PC-9 (cell line): ENCODE measurements at regions of chr13 and their contacts with region 1.

Region 1: DNA sequence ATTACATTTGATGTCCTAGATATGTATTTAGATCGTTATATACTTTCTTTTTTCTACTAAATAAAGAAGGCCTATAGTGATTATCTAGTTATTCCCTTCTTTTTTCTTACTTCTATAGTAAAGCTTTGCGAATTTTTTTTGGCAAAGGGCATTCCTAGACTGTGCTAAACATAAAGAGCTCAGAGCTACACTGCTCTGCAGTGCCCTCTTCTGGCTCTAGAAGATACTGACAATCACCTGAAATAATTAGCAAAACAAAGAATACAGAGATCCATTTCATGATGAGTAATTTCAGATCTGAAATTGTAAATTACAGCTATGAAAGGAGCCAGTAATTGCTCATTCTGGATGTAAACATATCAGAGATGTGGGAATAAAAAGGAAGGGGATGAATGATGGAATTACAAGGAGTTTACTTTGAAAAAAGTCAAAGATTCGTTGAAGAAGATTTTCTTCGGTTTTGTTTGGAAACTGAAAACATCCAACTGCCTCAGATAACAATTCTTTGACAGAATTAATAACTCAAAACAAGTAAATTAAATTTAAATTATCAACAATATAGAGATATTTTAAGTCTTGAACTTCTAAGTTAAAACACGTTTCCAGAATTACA is 288.5 kb downstream of the NALCN start:
- DNase-seq: peak in 1 of 2 experiments; percentile 10
- H3K4me3 ChIP-seq: no peak overlapping the region
- H3K27ac ChIP-seq: no peak overlapping the region
- H3K4me1 ChIP-seq: no peaks in the 10 kb centered on the region
- H3K27me3 ChIP-seq: no peaks in the 10 kb centered on the region
- CTCF ChIP-seq: peak; percentile 93

Region 2: DNA sequence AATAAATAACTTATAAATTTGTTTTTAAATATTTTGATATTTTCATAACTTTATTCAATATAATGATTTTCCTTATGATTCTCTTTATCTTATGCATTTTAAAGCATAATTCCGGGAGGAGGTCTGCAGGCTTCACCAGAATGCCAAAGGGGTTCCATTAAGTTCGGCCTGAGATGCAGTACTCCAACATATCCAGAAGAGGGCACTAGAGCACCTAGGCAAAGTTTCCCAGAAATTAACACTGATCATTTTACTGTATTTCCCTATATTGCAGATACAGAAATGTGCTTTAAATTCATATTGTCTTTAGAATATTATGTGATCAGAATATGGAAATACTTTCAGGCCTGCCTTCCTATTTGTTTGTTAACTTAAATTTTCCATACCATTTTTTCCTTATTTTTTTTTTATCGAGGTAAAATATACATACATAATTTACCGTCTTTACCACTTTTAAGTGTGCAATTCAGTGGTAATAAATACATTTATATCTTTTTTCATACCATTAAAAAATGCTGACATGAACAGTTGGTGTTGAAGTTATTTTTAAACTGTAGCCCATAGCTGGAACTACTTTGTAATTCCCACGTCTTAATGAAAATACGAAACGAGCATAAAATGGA is 1685.5 kb before region 1 on chr13:
- CTCF ChIA-PET with region 1: no interaction called
- POLR2A ChIA-PET with region 1: no interaction called
- intact Hi-C with region 1: loop called (anchors 10 kb)
- DNase-seq: peak; percentile 42 to 49
- H3K4me3 ChIP-seq: no peak overlapping the region
- H3K27ac ChIP-seq: no peak overlapping the region
- H3K4me1 ChIP-seq: peaks cover 19% of the 10 kb centered on the region
- H3K27me3 ChIP-seq: no peaks in the 10 kb centered on the region
- CTCF ChIP-seq: peak; percentile 96

Region 3: GRCh38 chr13:99656092-99656745 is 1471.6 kb before region 1 on chr13:
- CTCF ChIA-PET with region 1: interaction called, 4 read pairs
- POLR2A ChIA-PET with region 1: no interaction called
- intact Hi-C with region 1: loop called (anchors 10 kb)
- DNase-seq: peak; percentile 53 to 60
- H3K4me3 ChIP-seq: no peak overlapping the region
- H3K27ac ChIP-seq: no peak overlapping the region
- H3K4me1 ChIP-seq: no peaks in the 10 kb centered on the region
- H3K27me3 ChIP-seq: no peaks in the 10 kb centered on the region
- CTCF ChIP-seq: peak; percentile 96

Region 4: GRCh38 chr13:99908140-99908803 is 1219.6 kb before region 1 on chr13:
- CTCF ChIA-PET with region 1: no interaction called
- POLR2A ChIA-PET with region 1: no interaction called
- intact Hi-C with region 1: loop called (anchors 10 kb)
- DNase-seq: peak in 1 of 2 experiments; percentile 49
- H3K4me3 ChIP-seq: no peak overlapping the region
- H3K27ac ChIP-seq: no peak overlapping the region
- H3K4me1 ChIP-seq: no peaks in the 10 kb centered on the region
- H3K27me3 ChIP-seq: no peaks in the 10 kb centered on the region
- CTCF ChIP-seq: no peak

Region 5: DNA sequence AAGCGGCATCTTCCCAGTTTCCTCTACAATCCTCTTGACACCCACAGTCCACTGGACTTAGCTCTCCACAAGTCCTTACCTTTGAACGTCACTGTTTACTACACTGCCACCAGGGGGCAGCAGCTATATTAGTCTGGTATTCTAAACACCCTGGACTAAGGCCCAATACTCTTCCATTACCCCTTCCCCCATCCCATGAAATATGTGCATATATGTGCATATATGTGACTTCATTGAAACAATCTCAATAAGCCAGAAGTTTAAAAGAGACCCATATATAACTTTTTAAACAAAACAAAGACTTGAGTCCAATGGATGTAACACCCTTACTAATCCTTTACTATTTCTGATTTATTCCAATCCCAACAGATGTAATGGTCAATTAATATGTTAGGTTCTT is 554.7 kb before region 1 on chr13:
- CTCF ChIA-PET with region 1: interaction called, 4 read pairs
- POLR2A ChIA-PET with region 1: no interaction called
- intact Hi-C with region 1: loop called (anchors 1 kb)
- DNase-seq: peak; percentile 38 to 64
- H3K4me3 ChIP-seq: no peak overlapping the region
- H3K27ac ChIP-seq: no peak overlapping the region
- H3K4me1 ChIP-seq: no peaks in the 10 kb centered on the region
- H3K27me3 ChIP-seq: no peaks in the 10 kb centered on the region
- CTCF ChIP-seq: peak; percentile 89

Region 6: GRCh38 chr13:100721885-100722512 is 405.8 kb before region 1 on chr13:
- CTCF ChIA-PET with region 1: no interaction called
- POLR2A ChIA-PET with region 1: no interaction called
- intact Hi-C with region 1: loop called (anchors 1 kb)
- DNase-seq: peak in 1 of 2 experiments; percentile 29
- H3K4me3 ChIP-seq: no peak overlapping the region
- H3K27ac ChIP-seq: no peak overlapping the region
- H3K4me1 ChIP-seq: no peaks in the 10 kb centered on the region
- H3K27me3 ChIP-seq: peaks cover 47% of the 10 kb centered on the region
- CTCF ChIP-seq: peak; percentile 84

Region 7: GRCh38 chr13:100976993-100977392 is 150.9 kb before region 1 on chr13:
- CTCF ChIA-PET with region 1: no interaction called
- POLR2A ChIA-PET with region 1: no interaction called
- intact Hi-C with region 1: no loop called
- DNase-seq: no peak
- H3K4me3 ChIP-seq: no peak overlapping the region
- H3K27ac ChIP-seq: no peak overlapping the region
- H3K4me1 ChIP-seq: no peaks in the 10 kb centered on the region
- H3K27me3 ChIP-seq: peaks cover 40% of the 10 kb centered on the region; the same call in 1 of the 2 replicates
- CTCF ChIP-seq: no peak